ENCODE measurements at regions of chr16 and their contacts with region 1.

Region 1: DNA sequence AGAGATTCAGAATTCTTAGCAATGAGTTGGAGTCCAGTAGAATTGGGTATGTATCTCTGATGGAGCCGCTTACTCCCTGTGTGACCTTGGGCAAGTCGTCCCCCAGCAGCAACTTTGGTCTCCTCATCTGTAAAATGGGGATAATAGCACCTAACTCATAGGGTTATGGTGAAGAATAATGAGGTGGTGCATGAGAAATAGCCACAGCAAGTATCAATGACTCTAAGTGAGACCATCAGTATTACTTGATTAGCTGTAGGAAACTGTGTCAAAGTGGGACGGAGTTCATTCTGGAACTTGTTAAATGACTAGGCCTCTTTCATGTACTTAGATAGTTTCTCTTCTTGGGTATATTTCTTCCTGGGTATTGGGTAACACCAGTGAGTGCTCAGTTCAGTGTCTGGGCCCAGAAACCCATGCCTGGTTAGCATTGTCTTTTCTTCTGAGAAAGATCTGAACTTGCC is 6.4 kb downstream of the PRKCB start:
- DNase-seq: peak; percentile 78
- H3K4me3 Mint-ChIP-seq: no peak overlapping the region
- H3K27ac Mint-ChIP-seq: peak overlapping the region; percentile 56
- H3K4me1 Mint-ChIP-seq: peaks cover 89% of the 10 kb centered on the region
- H3K27me3 Mint-ChIP-seq: no peaks in the 10 kb centered on the region

Region 2: DNA sequence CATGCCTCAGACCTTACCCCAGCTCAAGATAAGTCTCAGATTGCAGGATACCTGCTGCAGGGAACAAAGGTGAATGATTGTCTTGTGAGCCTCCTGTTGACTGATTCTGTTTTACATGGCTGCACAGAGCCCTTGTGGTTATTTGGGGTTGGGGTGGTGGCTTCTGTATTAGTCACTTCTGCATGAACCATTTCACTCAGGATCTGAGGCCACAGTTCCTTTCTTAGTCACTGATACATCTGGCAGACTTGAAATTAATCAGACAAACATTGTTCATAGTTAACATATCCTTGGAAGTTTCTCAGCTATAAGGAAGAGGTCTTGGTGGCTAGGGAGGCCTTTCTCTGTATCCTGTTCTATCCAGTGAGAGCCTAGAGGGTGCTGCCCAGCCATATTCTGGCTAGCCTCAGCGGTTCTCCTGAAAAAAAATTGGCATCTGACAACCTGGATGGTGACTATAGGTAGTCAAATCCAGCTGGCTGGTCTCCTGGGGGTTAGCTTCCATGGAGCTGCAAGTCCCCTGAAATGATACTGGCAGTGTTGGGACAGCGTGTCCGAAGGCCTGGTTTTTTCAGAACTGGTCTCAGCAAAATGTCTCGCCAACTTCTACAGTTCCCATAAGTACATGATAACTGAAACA is 171.9 kb before region 1 on chr16:
- CTCF ChIA-PET with region 1: no interaction called
- intact Hi-C with region 1: loop called (anchors 1 kb)
- DNase-seq: peak; percentile 82
- H3K4me3 Mint-ChIP-seq: no peak overlapping the region
- H3K27ac Mint-ChIP-seq: peak overlapping the region; percentile 13
- H3K4me1 Mint-ChIP-seq: peaks cover 16% of the 10 kb centered on the region
- H3K27me3 Mint-ChIP-seq: no peaks in the 10 kb centered on the region

Region 3: GRCh38 chr16:23852794-23853562 is 10.8 kb after region 1 on chr16:
- CTCF ChIA-PET with region 1: interaction called, 3 read pairs
- intact Hi-C with region 1: loop called (anchors 1 kb)
- DNase-seq: peak; percentile 30
- H3K4me3 Mint-ChIP-seq: no peak overlapping the region
- H3K27ac Mint-ChIP-seq: peak overlapping the region; percentile 38
- H3K4me1 Mint-ChIP-seq: peaks cover 85% of the 10 kb centered on the region
- H3K27me3 Mint-ChIP-seq: no peaks in the 10 kb centered on the region

Region 4: GRCh38 chr16:23877107-23878090 is 35.2 kb after region 1 on chr16:
- CTCF ChIA-PET with region 1: interaction called, 4 read pairs
- intact Hi-C with region 1: loop called (anchors 1 kb)
- DNase-seq: peak; percentile 52
- H3K4me3 Mint-ChIP-seq: no peak overlapping the region
- H3K27ac Mint-ChIP-seq: peak overlapping the region; percentile 55
- H3K4me1 Mint-ChIP-seq: peaks cover 69% of the 10 kb centered on the region
- H3K27me3 Mint-ChIP-seq: no peaks in the 10 kb centered on the region

Region 5: GRCh38 chr16:23959072-23959751 is 117.0 kb after region 1 on chr16:
- CTCF ChIA-PET with region 1: no interaction called
- intact Hi-C with region 1: loop called (anchors 1 kb)
- DNase-seq: peak; percentile 32
- H3K4me3 Mint-ChIP-seq: peak overlapping the region; percentile 66
- H3K27ac Mint-ChIP-seq: peak overlapping the region; percentile 81
- H3K4me1 Mint-ChIP-seq: peaks cover 73% of the 10 kb centered on the region
- H3K27me3 Mint-ChIP-seq: no peaks in the 10 kb centered on the region

Region 6: GRCh38 chr16:24189941-24190340 is 347.8 kb after region 1 on chr16:
- CTCF ChIA-PET with region 1: no interaction called
- intact Hi-C with region 1: loop called (anchors 1 kb)
- DNase-seq: peak; percentile 13
- H3K4me3 Mint-ChIP-seq: no peak overlapping the region
- H3K27ac Mint-ChIP-seq: peak overlapping the region; percentile 46
- H3K4me1 Mint-ChIP-seq: peaks cover 23% of the 10 kb centered on the region
- H3K27me3 Mint-ChIP-seq: no peaks in the 10 kb centered on the region

Measured in activated naive CD4-positive, alpha-beta T cell treated with anti-CD3 and anti-CD28 coated beads for 36 hours (primary cell).